ENCODE measurements at regions of chr2 and their contacts with region 1.

Region 1: DNA sequence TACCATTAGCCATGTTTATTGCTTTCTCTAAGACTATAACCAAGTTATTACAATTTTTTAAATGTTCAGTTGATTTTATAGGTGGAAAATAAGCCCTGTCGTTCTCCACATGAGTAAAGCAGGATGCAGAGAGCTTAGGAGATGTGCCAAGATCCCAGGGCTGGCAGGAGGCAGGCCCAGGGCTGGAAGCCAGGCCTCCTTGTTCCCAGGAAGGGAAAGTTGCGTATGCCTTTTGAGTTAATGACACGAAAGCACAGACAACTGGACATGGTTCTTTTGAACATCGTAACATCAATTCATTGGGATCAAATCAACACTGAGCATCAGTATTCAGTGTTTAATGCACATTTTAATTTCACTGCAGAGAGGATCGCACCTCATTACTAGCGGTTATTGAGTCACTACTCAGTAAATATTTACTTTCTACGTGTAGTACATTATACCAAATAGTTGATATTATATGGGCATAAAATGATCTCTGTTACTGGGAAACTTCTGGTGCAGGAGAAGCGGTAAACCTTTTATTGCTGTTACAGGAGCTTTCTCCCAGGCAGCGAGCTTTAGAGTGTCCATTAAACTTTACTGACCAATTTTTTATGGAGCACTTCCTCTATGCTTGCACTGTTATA is 60.0 kb downstream of the RNF144A start:
- DNase-seq: peak; percentile 91
- H3K4me3 ChIP-seq: peak overlapping the region in 2 of 4 donors; percentile 11 to 23
- H3K27ac ChIP-seq: peak overlapping the region in 3 of 4 donors; percentile 66 to 81 (median 73)
- H3K4me1 ChIP-seq: peaks cover 0 to 22% (median 13%) of the 10 kb centered on the region in 4 donors
- H3K27me3 ChIP-seq: no peaks in the 10 kb centered on the region
- CTCF ChIP-seq: no peak
- EP300 ChIP-seq: peak in 1 of 4 donors; percentile 10
- POLR2A ChIP-seq: no peak

Region 2: GRCh38 chr2:7014174-7014640 is 37.0 kb after region 1 on chr2:
- intact Hi-C with region 1: loop called (anchors 5 kb)
- DNase-seq: no peak
- H3K4me3 ChIP-seq: no peak overlapping the region
- H3K27ac ChIP-seq: peak overlapping the region in 3 of 4 donors; percentile 50 to 73 (median 59)
- H3K4me1 ChIP-seq: peaks cover 0 to 92% (median 79%) of the 10 kb centered on the region in 4 donors
- H3K27me3 ChIP-seq: no peaks in the 10 kb centered on the region
- CTCF ChIP-seq: peak in 3 of 4 experiments; percentile 28 to 35 (median 29)
- EP300 ChIP-seq: no peak
- POLR2A ChIP-seq: no peak

Region 3: GRCh38 chr2:7722212-7722910 is 745.1 kb after region 1 on chr2:
- intact Hi-C with region 1: no loop called
- DNase-seq: no peak
- H3K4me3 ChIP-seq: no peak overlapping the region
- H3K27ac ChIP-seq: no peak overlapping the region
- H3K4me1 ChIP-seq: peaks cover 0 to 11% (median 8%) of the 10 kb centered on the region in 4 donors
- H3K27me3 ChIP-seq: no peaks in the 10 kb centered on the region
- CTCF ChIP-seq: no peak
- EP300 ChIP-seq: no peak
- POLR2A ChIP-seq: no peak